ENCODE measurements at regions of chr5 and their contacts with region 1.

Region 1: DNA sequence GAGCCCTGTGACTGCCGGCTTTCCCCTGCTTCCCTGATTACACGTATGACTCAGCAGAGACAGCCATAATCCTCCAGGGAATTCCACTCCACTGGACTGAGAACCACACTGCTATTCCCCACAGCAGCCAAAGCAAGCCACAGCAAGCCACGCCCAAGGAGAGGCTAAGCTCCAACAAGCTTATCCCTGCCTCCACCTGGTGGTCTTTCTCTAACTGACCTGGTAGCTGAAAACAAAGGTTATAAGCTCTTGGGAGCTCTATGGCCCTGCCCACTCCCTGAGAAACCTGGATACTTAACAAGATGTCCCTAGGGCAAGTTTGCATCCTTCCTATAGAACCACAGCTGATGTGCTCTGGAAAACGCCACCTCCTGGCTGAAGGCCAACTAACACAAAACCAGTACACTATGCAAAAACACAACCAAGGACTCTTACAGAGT is 613.7 kb upstream of the CDH18 start:
- DNase-seq: peak; percentile 61
- ATAC-seq: peak; percentile 97
- H3K4me3 Mint-ChIP-seq: no peak overlapping the region
- H3K27ac Mint-ChIP-seq: no peak overlapping the region
- H3K4me1 Mint-ChIP-seq: peaks cover 5% of the 10 kb centered on the region
- H3K27me3 Mint-ChIP-seq: peaks cover 7% of the 10 kb centered on the region
- CTCF ChIP-seq: no peak

Region 2: GRCh38 chr5:20575571-20575970 is 26.1 kb before region 1 on chr5:
- CTCF ChIA-PET with region 1: interaction called, 11 read pairs
- POLR2A ChIA-PET with region 1: no interaction called
- DNase-seq: no peak
- ATAC-seq: peak; percentile 65
- H3K4me3 Mint-ChIP-seq: no peak overlapping the region
- H3K27ac Mint-ChIP-seq: no peak overlapping the region
- H3K4me1 Mint-ChIP-seq: peaks cover 6% of the 10 kb centered on the region
- H3K27me3 Mint-ChIP-seq: no peaks in the 10 kb centered on the region
- CTCF ChIP-seq: no peak